ENCODE measurements at regions of chr7 and their contacts with region 1.

Region 1: GRCh38 chr7:139771001-139771970 is 6.5 kb downstream of the HIPK2 start:
- DNase-seq: peak; percentile 91
- H3K4me3 Mint-ChIP-seq: peak overlapping the region; percentile 63
- H3K27ac Mint-ChIP-seq: peak overlapping the region; percentile 98
- H3K4me1 Mint-ChIP-seq: peaks cover 64% of the 10 kb centered on the region
- H3K27me3 Mint-ChIP-seq: no peaks in the 10 kb centered on the region
- CTCF ChIP-seq: no peak

Region 2: DNA sequence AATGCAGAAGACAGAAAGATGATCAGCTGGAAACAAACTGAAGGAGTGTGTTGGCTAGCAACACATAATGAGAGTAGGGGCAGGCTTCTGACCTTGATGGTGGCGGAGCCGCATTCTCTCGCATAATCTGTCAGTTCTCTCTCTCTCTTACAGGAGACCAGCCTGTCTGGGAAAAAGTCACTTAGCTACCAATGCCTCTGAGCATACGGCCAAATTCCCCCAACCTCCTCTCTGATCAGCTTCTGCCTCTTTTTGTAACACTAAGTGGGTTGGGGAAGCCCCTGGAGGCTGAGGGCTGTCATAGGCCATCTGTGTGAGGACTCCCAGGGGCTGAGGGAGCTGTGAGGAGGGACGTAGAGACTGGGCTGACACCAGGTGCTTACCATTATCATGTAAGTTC is 98.1 kb before region 1 on chr7:
- CTCF ChIA-PET with region 1: no interaction called
- POLR2A ChIA-PET with region 1: interaction called, 11 read pairs
- intact Hi-C with region 1: no loop called
- DNase-seq: peak; percentile 23
- H3K4me3 Mint-ChIP-seq: no peak overlapping the region
- H3K27ac Mint-ChIP-seq: peak overlapping the region; percentile 85
- H3K4me1 Mint-ChIP-seq: peaks cover 34% of the 10 kb centered on the region
- H3K27me3 Mint-ChIP-seq: no peaks in the 10 kb centered on the region
- CTCF ChIP-seq: no peak

Region 3: DNA sequence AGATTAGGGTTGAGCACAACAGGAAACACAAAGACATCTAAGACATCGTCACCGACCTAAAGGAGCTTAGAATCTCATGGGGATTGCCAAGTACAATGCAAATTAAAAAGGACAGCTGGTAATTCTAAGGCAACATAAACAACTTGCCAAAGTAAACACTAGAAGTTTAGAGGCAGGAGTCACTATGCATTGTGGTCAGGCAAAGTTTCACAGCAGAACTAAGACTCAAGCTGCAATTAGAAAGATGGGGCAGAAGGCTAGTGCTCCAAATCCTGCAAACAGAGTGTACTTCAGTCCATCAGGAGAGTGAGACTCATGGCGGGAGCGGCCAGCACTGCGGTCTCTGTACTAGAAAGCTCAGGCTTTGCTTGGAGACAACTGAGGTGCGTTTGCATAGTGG is 46.2 kb before region 1 on chr7:
- CTCF ChIA-PET with region 1: interaction called, 5 read pairs
- POLR2A ChIA-PET with region 1: interaction called, 16 read pairs
- intact Hi-C with region 1: loop called (anchors 2 kb)
- DNase-seq: peak; percentile 85
- H3K4me3 Mint-ChIP-seq: peak overlapping the region; percentile 54
- H3K27ac Mint-ChIP-seq: peak overlapping the region; percentile 68
- H3K4me1 Mint-ChIP-seq: peaks cover 43% of the 10 kb centered on the region
- H3K27me3 Mint-ChIP-seq: no peaks in the 10 kb centered on the region
- CTCF ChIP-seq: no peak

Region 4: GRCh38 chr7:139915864-139916716 is 144.8 kb after region 1 on chr7:
- CTCF ChIA-PET with region 1: interaction called, 5 read pairs
- POLR2A ChIA-PET with region 1: interaction called, 14 read pairs
- intact Hi-C with region 1: no loop called
- DNase-seq: peak; percentile 98
- H3K4me3 Mint-ChIP-seq: peak overlapping the region; percentile 58
- H3K27ac Mint-ChIP-seq: peak overlapping the region; percentile 94
- H3K4me1 Mint-ChIP-seq: peaks cover 42% of the 10 kb centered on the region
- H3K27me3 Mint-ChIP-seq: no peaks in the 10 kb centered on the region
- CTCF ChIP-seq: no peak